Natural killer cell (primary cell): ENCODE measurements at regions of chr18 and their contacts with region 1.

Region 1: GRCh38 chr18:31101183-31102024 is 817 bp downstream of the DSC2 start:
- DNase-seq: no peak
- ATAC-seq: no peak
- H3K4me3 ChIP-seq: no peak overlapping the region
- H3K4me3 Mint-ChIP-seq: no peak overlapping the region
- H3K27ac ChIP-seq: no peak overlapping the region
- H3K27ac Mint-ChIP-seq: no peak overlapping the region
- H3K4me1 ChIP-seq: no peaks in the 10 kb centered on the region
- H3K4me1 Mint-ChIP-seq: no peaks in the 10 kb centered on the region
- H3K27me3 ChIP-seq: peaks cover 8% of the 10 kb centered on the region
- H3K27me3 Mint-ChIP-seq: peaks cover 18 to 34% of the 10 kb centered on the region in 2 donors
- CTCF ChIP-seq: no peak

Region 2: DNA sequence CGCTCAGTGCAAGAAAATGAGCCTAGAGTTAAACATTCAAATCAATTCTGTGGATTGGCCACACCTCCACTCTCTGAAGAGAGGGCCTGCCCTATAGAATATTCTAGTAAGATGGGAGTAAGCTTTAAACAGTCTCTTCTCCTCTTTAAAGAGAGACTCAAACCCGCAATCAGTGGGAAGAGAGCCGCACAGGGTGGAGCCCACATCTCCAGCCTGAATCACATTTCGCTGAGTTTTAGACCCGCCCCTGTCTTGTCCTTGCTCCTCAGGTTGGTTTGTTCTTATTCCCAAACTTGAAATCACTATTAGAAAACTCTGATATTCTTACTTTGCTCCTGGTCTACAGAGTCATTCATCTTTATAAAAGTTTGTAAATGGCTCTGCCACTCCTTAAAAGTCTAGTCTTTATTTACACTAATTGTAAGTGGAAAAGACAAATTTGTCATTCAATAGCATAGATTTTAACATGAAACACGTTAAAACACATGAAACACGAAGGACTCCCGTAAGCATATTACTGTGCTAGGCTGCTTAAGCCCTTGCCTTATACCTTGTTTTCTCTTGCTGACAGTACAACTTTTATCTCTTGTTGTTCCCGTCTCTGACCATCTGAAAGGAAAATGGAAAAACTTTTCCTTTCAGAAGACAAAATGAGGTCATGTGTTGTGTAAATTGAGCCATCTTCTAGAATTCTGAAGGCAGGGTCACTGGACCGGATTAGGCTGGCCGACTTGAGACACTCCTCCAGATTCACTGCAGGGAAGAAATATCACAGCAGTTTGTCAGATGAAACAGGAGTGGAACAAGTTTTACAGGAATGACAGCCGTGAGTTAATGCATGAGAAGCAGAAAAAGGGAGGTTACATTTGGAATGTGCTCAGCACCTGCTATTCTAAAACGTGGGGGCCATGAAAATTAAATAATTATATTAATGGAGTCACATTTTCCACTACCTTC is 55.7 kb after region 1 on chr18:
- intact Hi-C with region 1: loop called (anchors 10 kb)
- DNase-seq: no peak
- ATAC-seq: no peak
- H3K4me3 ChIP-seq: no peak overlapping the region
- H3K4me3 Mint-ChIP-seq: no peak overlapping the region
- H3K27ac ChIP-seq: no peak overlapping the region
- H3K27ac Mint-ChIP-seq: no peak overlapping the region
- H3K4me1 ChIP-seq: no peaks in the 10 kb centered on the region
- H3K4me1 Mint-ChIP-seq: no peaks in the 10 kb centered on the region
- H3K27me3 ChIP-seq: no peaks in the 10 kb centered on the region
- H3K27me3 Mint-ChIP-seq: no peaks in the 10 kb centered on the region
- CTCF ChIP-seq: no peak